ENCODE measurements at regions of chr14 and their contacts with region 1.

Region 1: DNA sequence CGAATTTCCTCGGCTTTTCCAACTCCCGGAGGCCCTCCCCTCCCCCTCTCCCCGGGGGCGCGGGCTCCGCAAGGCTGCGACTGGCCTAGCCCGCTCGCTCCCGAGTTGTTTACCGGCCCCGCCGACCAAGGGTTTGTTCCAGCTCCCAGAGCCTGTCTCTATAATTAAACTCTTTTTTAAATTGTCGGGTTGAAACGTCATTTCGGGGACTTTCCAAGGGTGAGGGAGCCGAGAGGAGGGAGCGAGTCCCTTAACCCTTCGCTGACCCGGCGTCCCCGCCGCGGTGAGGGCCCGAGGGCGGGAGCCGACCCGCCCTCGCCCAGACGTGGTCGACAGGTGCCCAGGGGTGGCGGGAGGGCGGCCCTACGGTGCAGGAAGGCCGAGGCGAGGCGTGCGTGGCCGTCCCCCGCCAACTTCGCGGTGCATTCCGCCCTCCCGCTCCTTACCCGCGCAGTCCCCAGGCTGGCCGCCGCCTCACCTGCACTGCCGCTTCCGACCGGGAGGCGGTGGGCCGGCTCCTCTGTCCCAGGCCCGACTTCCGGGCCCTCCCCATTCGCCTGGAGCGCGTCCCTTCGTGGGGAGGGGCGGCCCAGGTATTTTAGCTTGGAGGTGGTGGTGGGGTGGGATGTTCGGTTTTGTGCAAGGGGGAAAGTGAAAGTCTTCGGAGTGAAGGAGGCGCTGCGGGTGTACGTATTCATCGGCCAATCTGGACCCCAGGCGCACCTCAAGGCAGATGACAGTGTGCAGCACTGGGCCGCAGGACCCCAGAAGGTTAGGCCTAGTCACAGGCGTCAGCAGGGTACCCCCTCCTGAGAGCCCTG is 2.9 kb upstream of the ZFP36L1 start:
- DNase-seq: peak; percentile 90 to 93
- H3K4me3 ChIP-seq: peak overlapping the region; percentile 86
- H3K4me3 Mint-ChIP-seq: peak overlapping the region; percentile 88
- H3K27ac Mint-ChIP-seq: peak overlapping the region; percentile 96
- H3K4me1 ChIP-seq: peaks cover 10% of the 10 kb centered on the region
- H3K4me1 Mint-ChIP-seq: peaks cover 11% of the 10 kb centered on the region
- H3K27me3 ChIP-seq: no peaks in the 10 kb centered on the region
- H3K27me3 Mint-ChIP-seq: no peaks in the 10 kb centered on the region
- CTCF ChIP-seq: peak; percentile 68 to 81

Region 2: GRCh38 chr14:68466491-68467032 is 329.2 kb before region 1 on chr14:
- CTCF ChIA-PET with region 1: interaction called, 6 read pairs
- POLR2A ChIA-PET with region 1: no interaction called
- intact Hi-C with region 1: loop called (anchors 2 kb)
- DNase-seq: peak; percentile 45 to 56
- H3K4me3 ChIP-seq: no peak overlapping the region
- H3K4me3 Mint-ChIP-seq: no peak overlapping the region
- H3K27ac Mint-ChIP-seq: peak overlapping the region; percentile 48
- H3K4me1 ChIP-seq: peaks cover 59% of the 10 kb centered on the region
- H3K4me1 Mint-ChIP-seq: peaks cover 52% of the 10 kb centered on the region
- H3K27me3 ChIP-seq: no peaks in the 10 kb centered on the region
- H3K27me3 Mint-ChIP-seq: no peaks in the 10 kb centered on the region
- CTCF ChIP-seq: no peak

Region 3: GRCh38 chr14:68627880-68628607 is 167.8 kb before region 1 on chr14:
- CTCF ChIA-PET with region 1: interaction called, 5 read pairs
- POLR2A ChIA-PET with region 1: interaction called, 20 read pairs
- intact Hi-C with region 1: loop called (anchors 1 kb)
- DNase-seq: peak; percentile 84 to 89
- H3K4me3 ChIP-seq: peak overlapping the region; percentile 49
- H3K4me3 Mint-ChIP-seq: peak overlapping the region; percentile 77
- H3K27ac Mint-ChIP-seq: peak overlapping the region; percentile 89
- H3K4me1 ChIP-seq: peaks cover 26% of the 10 kb centered on the region
- H3K4me1 Mint-ChIP-seq: peaks cover 15% of the 10 kb centered on the region
- H3K27me3 ChIP-seq: no peaks in the 10 kb centered on the region
- H3K27me3 Mint-ChIP-seq: no peaks in the 10 kb centered on the region
- CTCF ChIP-seq: no peak

Region 4: DNA sequence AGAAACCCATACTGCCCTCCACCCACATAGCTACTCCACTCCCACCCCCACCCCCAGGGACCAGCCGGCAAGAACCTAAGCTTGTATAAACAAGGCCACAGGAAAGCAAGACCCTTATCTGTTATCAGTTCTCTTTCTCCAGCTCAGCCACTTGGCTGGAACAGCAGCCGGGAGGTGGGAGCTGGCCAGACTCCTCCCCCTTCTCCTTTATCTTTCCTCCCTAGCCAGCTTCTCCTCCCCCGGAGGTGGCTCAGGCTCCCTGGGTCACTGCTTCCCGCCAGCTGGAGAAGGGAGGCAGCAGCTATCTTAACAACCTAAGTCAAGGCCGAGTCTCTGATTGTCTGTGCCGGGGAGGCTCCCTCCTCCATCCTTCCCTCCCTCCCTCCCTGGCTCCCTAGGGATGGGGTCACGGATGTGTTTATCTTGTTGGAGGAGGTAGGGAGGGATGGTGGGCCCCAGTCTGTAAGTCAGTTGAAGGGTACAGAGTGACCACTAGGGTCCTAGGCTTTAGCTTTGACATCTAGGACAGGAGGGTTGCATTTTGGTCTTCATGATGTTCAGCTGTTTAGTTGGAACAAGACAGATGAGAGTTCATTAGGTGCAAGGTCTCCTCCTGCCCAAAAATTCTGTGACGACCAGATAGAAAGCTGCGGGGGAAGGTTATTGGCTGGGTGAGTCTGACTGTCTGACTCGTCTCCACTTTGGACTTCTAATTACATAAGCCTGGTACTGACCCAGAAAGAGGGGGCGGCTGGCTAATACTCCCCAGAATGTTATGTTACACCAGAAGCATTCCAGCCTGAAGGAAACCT is 32.6 kb before region 1 on chr14:
- CTCF ChIA-PET with region 1: interaction called, 5 read pairs
- POLR2A ChIA-PET with region 1: interaction called, 12 read pairs
- intact Hi-C with region 1: loop called (anchors 2 kb)
- DNase-seq: peak; percentile 85 to 88
- H3K4me3 ChIP-seq: no peak overlapping the region
- H3K4me3 Mint-ChIP-seq: peak overlapping the region; percentile 43
- H3K27ac Mint-ChIP-seq: peak overlapping the region; percentile 57
- H3K4me1 ChIP-seq: peaks cover 45% of the 10 kb centered on the region
- H3K4me1 Mint-ChIP-seq: peaks cover 32% of the 10 kb centered on the region
- H3K27me3 ChIP-seq: no peaks in the 10 kb centered on the region
- H3K27me3 Mint-ChIP-seq: no peaks in the 10 kb centered on the region
- CTCF ChIP-seq: no peak

Region 5: DNA sequence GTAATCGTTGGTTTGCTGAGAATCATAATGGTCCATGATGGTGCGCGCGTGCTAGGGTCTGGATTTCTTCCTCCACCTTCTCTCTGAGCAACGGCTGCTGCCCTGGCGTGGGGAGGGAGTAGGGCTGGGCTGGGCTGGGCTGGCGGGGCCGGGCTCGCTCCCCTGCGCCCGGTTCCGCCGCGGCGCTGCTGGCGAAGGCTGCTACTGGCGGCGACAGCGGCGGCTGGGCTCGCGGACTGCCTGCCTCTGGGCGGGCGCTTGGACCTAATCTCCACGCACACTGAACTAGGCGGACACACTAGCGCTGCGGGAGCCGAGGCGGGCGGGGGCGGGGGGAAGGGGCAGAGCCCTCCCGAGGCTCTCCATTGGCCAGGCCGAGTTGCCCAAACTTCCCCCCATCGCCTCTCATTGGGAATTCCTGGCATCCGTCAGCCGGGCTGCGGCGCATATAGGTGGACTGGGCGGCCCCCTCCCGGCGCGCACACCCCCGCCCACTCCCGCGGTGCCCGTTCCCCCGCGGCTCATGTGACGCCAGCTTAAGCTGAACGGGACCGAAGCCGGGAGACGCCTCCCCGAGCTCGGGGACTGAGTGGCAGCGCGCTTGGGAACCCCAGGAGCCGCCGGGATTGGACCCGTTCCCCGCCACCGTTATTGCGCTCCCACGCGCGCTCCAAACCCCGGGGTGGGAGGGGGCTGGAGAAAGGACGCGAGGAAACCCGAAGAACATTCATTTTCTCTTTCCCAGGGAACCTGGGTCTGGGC is 183.4 kb after region 1 on chr14 and contains the start of gene ACTN1:
- CTCF ChIA-PET with region 1: no interaction called
- POLR2A ChIA-PET with region 1: no interaction called
- intact Hi-C with region 1: loop called (anchors 5 kb)
- DNase-seq: peak; percentile 96 to 97
- H3K4me3 ChIP-seq: peak within 1 kb of the TSS; percentile 96
- H3K4me3 Mint-ChIP-seq: peak within 1 kb of the TSS; percentile 98
- H3K27ac Mint-ChIP-seq: peak within 1 kb of the TSS; percentile 84
- H3K4me1 ChIP-seq: peaks cover 33% of the 10 kb centered on the region
- H3K4me1 Mint-ChIP-seq: peaks cover 38% of the 10 kb centered on the region
- H3K27me3 ChIP-seq: no peaks in the 10 kb centered on the region
- H3K27me3 Mint-ChIP-seq: no peaks in the 10 kb centered on the region
- CTCF ChIP-seq: no peak
- total RNA-seq, gene ACTN1: 170 and 181 TPM in 2 replicates

Region 6: DNA sequence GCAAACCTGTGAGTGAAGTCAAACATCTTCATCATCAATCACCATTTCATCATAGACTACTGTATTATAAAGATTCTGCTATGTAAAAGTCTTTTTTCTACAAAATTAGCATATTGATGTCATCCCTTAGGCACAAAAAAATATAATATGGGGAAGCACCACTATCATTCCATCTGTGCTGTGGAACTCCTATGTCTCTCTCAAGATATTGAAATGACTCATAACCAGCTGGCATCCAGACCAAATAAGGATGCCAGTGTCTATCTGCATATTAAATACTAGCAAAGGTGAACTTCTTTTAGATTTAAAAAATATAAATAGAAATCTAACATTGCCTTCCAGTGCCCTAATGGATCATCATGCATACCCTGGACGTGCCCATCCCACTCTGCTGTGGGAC is 375.0 kb after region 1 on chr14:
- CTCF ChIA-PET with region 1: no interaction called
- POLR2A ChIA-PET with region 1: no interaction called
- intact Hi-C with region 1: no loop called
- DNase-seq: no peak
- H3K4me3 ChIP-seq: no peak overlapping the region
- H3K4me3 Mint-ChIP-seq: no peak overlapping the region
- H3K27ac Mint-ChIP-seq: no peak overlapping the region
- H3K4me1 ChIP-seq: no peaks in the 10 kb centered on the region
- H3K4me1 Mint-ChIP-seq: no peaks in the 10 kb centered on the region
- H3K27me3 ChIP-seq: no peaks in the 10 kb centered on the region
- H3K27me3 Mint-ChIP-seq: peaks cover 2% of the 10 kb centered on the region
- CTCF ChIP-seq: no peak

Measured in Caco-2 (cell line).